B cell (primary cell): ENCODE measurements at regions of chr3 and their contacts with region 1.

Region 1: DNA sequence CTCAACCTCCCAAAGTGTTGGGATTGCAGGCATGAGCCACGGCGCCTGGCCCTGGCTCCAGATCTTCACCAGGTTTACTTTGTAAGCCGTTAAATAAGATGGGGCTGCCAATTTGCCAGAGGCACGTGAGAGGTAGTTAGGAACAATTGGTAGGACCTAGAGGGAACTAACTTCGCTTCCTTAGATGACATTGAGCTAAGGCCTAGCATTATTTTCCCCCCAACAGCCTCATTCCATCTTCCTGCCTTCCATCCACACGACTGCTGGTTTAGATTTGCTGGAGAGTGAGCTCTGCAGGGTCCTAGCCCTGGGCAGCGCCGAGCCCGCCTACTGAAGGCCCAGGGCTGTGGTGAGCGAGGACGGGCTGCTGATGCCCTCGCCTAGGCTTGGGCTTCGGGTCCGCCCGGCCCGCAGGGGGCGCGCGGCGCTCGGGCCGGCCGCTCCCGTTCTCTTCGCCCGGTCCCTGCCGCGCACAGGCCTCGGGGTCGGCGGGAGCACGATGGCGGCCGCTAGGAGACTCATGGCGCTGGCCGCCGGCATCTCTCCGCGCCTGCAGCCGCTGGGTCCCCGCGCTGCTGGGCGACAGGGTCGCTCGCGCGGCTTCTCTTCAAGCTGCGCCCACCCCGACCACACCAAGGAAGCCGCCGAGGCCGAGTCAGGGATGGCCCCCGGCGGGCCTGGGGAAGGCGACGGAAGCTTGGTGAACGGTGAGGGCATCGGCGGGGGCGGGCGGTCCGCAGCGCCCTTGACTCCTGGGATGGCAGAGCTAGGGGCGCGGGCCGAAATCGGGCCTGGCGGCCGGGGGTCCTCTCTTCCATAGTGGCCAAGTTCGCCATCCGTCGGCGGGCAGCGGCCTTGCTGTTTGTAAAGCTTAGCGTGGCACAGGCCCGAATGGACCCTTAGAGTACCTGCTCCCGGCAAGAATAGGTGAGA is 21.9 kb downstream of the DHX30 start:
- DNase-seq: peak; percentile 88
- ATAC-seq: peak; percentile 99
- H3K4me3 ChIP-seq: peak overlapping the region; percentile 54 to 95 (median 83)
- H3K4me3 Mint-ChIP-seq: peak overlapping the region; percentile 91
- H3K27ac ChIP-seq: peak overlapping the region; percentile 29 to 69
- H3K27ac Mint-ChIP-seq: peak overlapping the region; percentile 87
- H3K4me1 ChIP-seq: peaks cover 13 to 24% of the 10 kb centered on the region in 2 donors
- H3K4me1 Mint-ChIP-seq: peaks cover 32% of the 10 kb centered on the region
- H3K27me3 ChIP-seq: no peaks in the 10 kb centered on the region
- H3K27me3 Mint-ChIP-seq: no peaks in the 10 kb centered on the region
- CTCF ChIP-seq: peak; percentile 84

Region 2: DNA sequence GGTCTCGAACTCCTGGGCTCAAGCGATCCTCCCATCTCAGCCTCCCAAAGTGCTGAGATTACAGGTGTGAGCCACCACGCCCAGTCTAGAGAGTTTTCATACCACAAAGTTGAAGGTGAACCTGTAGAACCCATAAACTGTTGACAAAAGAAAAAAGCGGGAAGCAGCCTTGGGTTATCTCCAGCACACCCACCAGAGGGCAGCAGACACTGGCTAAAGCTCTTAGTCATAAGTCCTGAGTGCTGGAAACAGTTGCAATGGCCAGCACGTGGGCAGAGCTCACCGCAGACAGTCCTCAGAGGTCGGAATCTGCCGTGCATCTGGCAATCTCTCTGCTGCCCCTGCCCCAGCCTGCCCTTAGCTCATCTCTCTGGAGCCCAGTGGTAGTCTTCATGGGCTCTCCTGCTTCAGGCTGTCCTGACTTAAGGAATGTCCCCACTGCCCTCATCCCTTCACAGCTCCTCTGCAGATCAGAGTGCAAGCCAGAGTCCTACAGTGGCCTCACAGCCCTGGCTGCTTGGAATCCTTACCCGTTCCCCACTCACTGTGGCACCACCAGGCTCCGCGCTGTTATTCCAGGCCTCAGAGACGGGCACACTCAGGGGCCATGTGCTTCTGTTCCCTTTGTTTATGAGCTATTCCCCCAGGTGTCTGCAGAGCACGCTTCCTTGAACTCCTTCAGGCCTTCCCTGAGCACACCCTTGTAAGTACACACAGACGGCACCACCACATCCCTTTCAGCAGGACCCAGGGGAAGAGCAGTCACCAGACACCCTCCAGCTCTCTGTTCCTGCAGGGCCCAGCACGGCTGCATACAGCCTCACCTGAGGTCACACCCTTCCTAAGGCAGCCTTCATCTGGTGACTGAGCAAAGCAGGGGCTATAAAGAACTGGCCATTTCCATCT is 302.5 kb before region 1 on chr3:
- CTCF ChIA-PET with region 1: interaction called, 39 read pairs
- POLR2A ChIA-PET with region 1: no interaction called
- intact Hi-C with region 1: loop called (anchors 1 kb)
- DNase-seq: peak; percentile 83
- ATAC-seq: peak; percentile 95
- H3K4me3 ChIP-seq: no peak overlapping the region
- H3K4me3 Mint-ChIP-seq: no peak overlapping the region
- H3K27ac ChIP-seq: no peak overlapping the region
- H3K27ac Mint-ChIP-seq: no peak overlapping the region
- H3K4me1 ChIP-seq: peaks cover 3 to 4% of the 10 kb centered on the region in 2 donors
- H3K4me1 Mint-ChIP-seq: peaks cover 9% of the 10 kb centered on the region
- H3K27me3 ChIP-seq: no peaks in the 10 kb centered on the region
- H3K27me3 Mint-ChIP-seq: no peaks in the 10 kb centered on the region
- CTCF ChIP-seq: peak; percentile 92

Region 3: GRCh38 chr3:47685037-47685436 is 139.8 kb before region 1 on chr3:
- CTCF ChIA-PET with region 1: no interaction called
- POLR2A ChIA-PET with region 1: no interaction called
- intact Hi-C with region 1: no loop called
- DNase-seq: no peak
- ATAC-seq: no peak
- H3K4me3 ChIP-seq: no peak overlapping the region
- H3K4me3 Mint-ChIP-seq: no peak overlapping the region
- H3K27ac ChIP-seq: no peak overlapping the region
- H3K27ac Mint-ChIP-seq: no peak overlapping the region
- H3K4me1 ChIP-seq: no peaks in the 10 kb centered on the region
- H3K4me1 Mint-ChIP-seq: peaks cover 3% of the 10 kb centered on the region
- H3K27me3 ChIP-seq: no peaks in the 10 kb centered on the region
- H3K27me3 Mint-ChIP-seq: no peaks in the 10 kb centered on the region
- CTCF ChIP-seq: no peak

Region 4: GRCh38 chr3:47761046-47761445 is 63.8 kb before region 1 on chr3:
- CTCF ChIA-PET with region 1: no interaction called
- POLR2A ChIA-PET with region 1: no interaction called
- intact Hi-C with region 1: loop called (anchors 2 kb)
- DNase-seq: no peak
- ATAC-seq: no peak
- H3K4me3 ChIP-seq: no peak overlapping the region
- H3K4me3 Mint-ChIP-seq: no peak overlapping the region
- H3K27ac ChIP-seq: no peak overlapping the region
- H3K27ac Mint-ChIP-seq: no peak overlapping the region
- H3K4me1 ChIP-seq: no peaks in the 10 kb centered on the region
- H3K4me1 Mint-ChIP-seq: peaks cover 5% of the 10 kb centered on the region
- H3K27me3 ChIP-seq: no peaks in the 10 kb centered on the region
- H3K27me3 Mint-ChIP-seq: no peaks in the 10 kb centered on the region
- CTCF ChIP-seq: no peak

Region 5: DNA sequence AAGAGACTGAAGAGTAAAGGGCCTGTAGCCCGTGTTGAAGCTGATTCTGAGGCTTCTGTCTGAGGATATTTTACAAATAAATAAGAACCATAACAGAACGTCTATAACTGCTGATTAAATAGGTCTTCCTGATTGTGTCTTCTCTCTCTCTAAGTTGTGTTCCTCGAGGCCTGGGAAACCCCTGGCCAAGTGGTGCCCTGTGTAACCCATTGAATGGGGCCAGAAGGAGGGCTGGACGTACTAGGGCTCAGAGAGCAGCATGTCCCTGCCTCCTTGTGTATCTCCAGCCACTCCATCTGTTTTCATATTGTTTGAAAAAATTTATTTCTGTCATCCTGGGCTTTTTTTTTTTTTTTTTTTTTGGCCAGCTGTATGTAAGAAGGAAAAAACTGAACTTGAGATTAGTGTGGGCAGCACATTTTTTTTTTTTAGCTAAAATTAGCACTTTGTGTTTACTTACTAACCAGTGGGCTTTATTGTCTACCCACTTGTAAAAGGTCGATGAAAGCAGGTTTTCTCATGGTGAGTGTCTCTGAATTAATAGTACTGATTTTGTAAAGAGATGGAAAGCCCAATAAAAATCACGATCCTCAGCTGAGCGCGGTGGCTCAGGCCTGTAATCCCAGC is 11.1 kb before region 1 on chr3:
- CTCF ChIA-PET with region 1: interaction called, 32 read pairs
- POLR2A ChIA-PET with region 1: no interaction called
- intact Hi-C with region 1: no loop called
- DNase-seq: no peak
- ATAC-seq: no peak
- H3K4me3 ChIP-seq: no peak overlapping the region
- H3K4me3 Mint-ChIP-seq: no peak overlapping the region
- H3K27ac ChIP-seq: no peak overlapping the region
- H3K27ac Mint-ChIP-seq: no peak overlapping the region
- H3K4me1 ChIP-seq: no peaks in the 10 kb centered on the region
- H3K4me1 Mint-ChIP-seq: peaks cover 2% of the 10 kb centered on the region
- H3K27me3 ChIP-seq: no peaks in the 10 kb centered on the region
- H3K27me3 Mint-ChIP-seq: no peaks in the 10 kb centered on the region
- CTCF ChIP-seq: no peak

Region 6: DNA sequence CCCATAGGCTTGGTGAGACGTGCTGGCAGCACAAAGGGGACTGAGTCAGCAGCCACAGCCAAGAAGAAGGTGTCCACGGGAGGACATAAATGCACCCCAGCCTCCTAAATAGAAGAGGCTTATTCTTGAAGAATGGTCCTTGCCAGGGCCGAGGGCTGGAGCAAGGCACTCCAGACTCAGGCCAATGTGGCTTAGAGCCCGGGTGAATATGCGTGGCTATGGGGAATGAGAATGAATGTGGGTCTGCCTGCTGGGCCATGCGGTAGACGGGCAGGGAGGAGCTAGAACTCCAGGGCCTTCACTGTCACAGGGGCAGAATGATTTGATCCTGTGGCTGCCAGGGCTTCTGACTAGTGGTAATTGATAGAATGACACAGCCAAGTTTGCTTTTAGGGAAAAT is 12.2 kb after region 1 on chr3:
- CTCF ChIA-PET with region 1: interaction called, 18 read pairs
- POLR2A ChIA-PET with region 1: no interaction called
- intact Hi-C with region 1: no loop called
- DNase-seq: no peak
- ATAC-seq: no peak
- H3K4me3 ChIP-seq: no peak overlapping the region
- H3K4me3 Mint-ChIP-seq: no peak overlapping the region
- H3K27ac ChIP-seq: no peak overlapping the region
- H3K27ac Mint-ChIP-seq: peak overlapping the region; percentile 50
- H3K4me1 ChIP-seq: no peaks in the 10 kb centered on the region
- H3K4me1 Mint-ChIP-seq: peaks cover 2% of the 10 kb centered on the region
- H3K27me3 ChIP-seq: no peaks in the 10 kb centered on the region
- H3K27me3 Mint-ChIP-seq: no peaks in the 10 kb centered on the region
- CTCF ChIP-seq: no peak

Region 7: GRCh38 chr3:47859956-47860605 is 35.3 kb after region 1 on chr3:
- CTCF ChIA-PET with region 1: no interaction called
- POLR2A ChIA-PET with region 1: no interaction called
- intact Hi-C with region 1: no loop called
- DNase-seq: no peak
- ATAC-seq: no peak
- H3K4me3 ChIP-seq: no peak overlapping the region
- H3K4me3 Mint-ChIP-seq: no peak overlapping the region
- H3K27ac ChIP-seq: no peak overlapping the region
- H3K27ac Mint-ChIP-seq: no peak overlapping the region
- H3K4me1 ChIP-seq: no peaks in the 10 kb centered on the region
- H3K4me1 Mint-ChIP-seq: no peaks in the 10 kb centered on the region
- H3K27me3 ChIP-seq: no peaks in the 10 kb centered on the region
- H3K27me3 Mint-ChIP-seq: no peaks in the 10 kb centered on the region
- CTCF ChIP-seq: no peak

Region 8: DNA sequence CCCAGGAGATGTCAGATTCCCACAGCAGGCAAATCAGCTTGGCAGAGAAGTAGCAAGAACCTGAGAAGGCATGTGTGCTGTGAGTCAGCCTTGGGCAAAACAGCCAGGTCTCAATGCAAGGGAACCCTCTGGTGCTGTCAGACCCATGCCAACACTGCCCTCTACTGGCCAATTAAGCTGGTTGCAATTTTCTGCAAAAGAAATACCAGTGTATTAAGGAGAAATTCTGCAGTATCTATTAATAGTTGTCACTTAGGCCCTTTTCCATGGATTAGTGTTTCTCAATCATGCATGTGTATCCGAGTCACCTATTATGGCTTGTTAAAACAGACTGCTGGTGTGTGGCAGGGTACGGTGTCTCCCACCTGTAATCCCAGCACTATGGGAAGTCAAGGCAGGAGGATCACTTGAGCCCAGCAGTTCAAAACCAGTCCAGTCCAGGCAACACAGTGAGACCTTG is 165.2 kb after region 1 on chr3:
- CTCF ChIA-PET with region 1: interaction called, 55 read pairs
- POLR2A ChIA-PET with region 1: interaction called, 4 read pairs
- intact Hi-C with region 1: loop called (anchors 1 kb)
- DNase-seq: peak; percentile 81
- ATAC-seq: peak; percentile 88
- H3K4me3 ChIP-seq: no peak overlapping the region
- H3K4me3 Mint-ChIP-seq: no peak overlapping the region
- H3K27ac ChIP-seq: no peak overlapping the region
- H3K27ac Mint-ChIP-seq: no peak overlapping the region
- H3K4me1 ChIP-seq: peaks cover 0 to 5% of the 10 kb centered on the region in 2 donors
- H3K4me1 Mint-ChIP-seq: peaks cover 7% of the 10 kb centered on the region
- H3K27me3 ChIP-seq: no peaks in the 10 kb centered on the region
- H3K27me3 Mint-ChIP-seq: no peaks in the 10 kb centered on the region
- CTCF ChIP-seq: peak; percentile 94

Region 9: DNA sequence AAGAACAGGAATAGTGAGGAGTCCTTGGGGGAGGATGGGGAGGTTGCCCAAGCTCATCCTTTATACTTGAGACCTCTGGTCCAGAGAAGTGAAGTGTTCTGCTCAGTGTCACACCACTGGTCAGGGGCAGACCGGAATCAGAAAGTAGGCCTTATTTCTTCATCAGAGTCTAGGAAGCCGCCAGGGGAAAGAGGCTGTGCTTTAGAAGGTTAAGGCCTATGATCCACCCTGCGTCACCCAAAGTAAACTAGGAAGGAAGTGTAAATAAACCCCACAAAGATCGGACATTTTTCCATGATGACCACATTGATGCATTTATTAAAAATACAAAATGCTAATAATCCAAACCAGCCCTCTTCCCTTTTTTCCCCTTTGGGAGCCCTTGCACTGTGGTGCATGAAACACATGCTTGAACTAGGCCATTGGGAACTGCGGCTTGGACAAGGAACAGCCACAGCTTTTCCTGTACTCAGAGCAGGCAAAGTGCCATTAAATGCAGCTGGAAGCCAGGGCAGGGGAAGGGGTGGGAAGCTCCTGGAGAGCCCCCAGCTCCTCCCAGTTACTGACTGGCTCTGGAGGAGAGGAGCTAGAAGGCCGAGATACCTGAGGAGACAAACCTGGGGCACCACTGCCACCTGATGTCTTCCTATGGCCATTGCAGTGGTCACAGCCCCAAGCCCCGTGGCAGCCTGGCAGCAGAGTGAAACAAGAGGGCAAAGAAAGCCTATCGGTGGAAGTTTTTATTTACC is 326.4 kb after region 1 on chr3:
- CTCF ChIA-PET with region 1: interaction called, 10 read pairs
- POLR2A ChIA-PET with region 1: no interaction called
- intact Hi-C with region 1: loop called (anchors 1 kb)
- DNase-seq: peak; percentile 67
- ATAC-seq: peak; percentile 81
- H3K4me3 ChIP-seq: no peak overlapping the region
- H3K4me3 Mint-ChIP-seq: no peak overlapping the region
- H3K27ac ChIP-seq: no peak overlapping the region
- H3K27ac Mint-ChIP-seq: no peak overlapping the region
- H3K4me1 ChIP-seq: no peaks in the 10 kb centered on the region
- H3K4me1 Mint-ChIP-seq: no peaks in the 10 kb centered on the region
- H3K27me3 ChIP-seq: no peaks in the 10 kb centered on the region
- H3K27me3 Mint-ChIP-seq: no peaks in the 10 kb centered on the region
- CTCF ChIP-seq: peak; percentile 70